Caco-2 (cell line): ENCODE measurements at regions of chr1 and their contacts with region 1.

Region 1: DNA sequence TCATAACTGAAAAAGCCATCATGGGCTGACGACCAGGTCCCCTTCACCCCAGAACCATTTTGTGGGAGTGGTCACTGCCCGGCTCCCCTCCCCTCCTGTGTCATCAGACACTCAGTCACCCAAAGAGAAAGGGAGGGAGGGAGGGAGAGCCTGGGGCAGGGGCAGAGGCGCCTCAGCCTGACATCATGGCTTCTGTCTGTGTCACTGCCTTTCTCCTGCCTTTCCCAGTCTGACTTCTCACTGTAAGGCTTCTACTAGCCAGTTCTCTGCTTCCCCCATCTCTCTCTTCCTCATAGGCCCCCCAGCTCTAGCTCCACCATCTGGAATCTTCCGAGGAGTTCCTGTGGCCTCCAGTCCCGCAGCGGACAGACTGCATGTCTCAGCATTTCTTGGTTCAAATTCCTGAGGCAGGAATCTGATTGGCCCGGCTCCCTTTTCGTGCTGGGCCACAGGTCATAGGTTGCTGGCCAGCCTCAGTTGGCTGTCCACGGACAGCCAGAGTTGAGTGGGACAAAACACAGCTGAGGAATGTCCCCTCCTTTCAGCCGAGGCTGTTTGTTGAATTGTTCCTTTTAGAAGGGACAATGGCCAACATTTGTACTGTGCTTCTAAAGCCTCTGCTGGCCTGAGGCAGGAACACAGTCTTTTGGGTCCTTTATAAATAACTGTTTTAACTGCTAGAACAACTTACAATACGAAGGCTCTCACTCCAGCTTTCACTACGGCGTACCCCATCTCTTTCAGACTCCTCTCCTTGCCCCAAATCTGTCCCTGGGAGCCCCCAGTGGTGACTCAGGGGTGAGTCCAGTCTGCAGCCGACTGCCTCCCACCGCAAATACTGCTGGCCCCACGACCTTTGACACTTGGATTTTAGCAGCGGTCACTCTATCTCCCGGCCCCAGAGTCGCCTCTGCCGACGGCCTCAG is 18.7 kb upstream of the KANK4 start:
- DNase-seq: no peak
- H3K4me3 ChIP-seq: no peak overlapping the region
- H3K4me3 Mint-ChIP-seq: peak overlapping the region; percentile 40
- H3K27ac Mint-ChIP-seq: peak overlapping the region; percentile 82
- H3K4me1 ChIP-seq: peaks cover 13% of the 10 kb centered on the region
- H3K4me1 Mint-ChIP-seq: peaks cover 11% of the 10 kb centered on the region
- H3K27me3 ChIP-seq: no peaks in the 10 kb centered on the region
- H3K27me3 Mint-ChIP-seq: no peaks in the 10 kb centered on the region
- CTCF ChIP-seq: peak in 1 of 2 experiments; percentile 12

Region 2: DNA sequence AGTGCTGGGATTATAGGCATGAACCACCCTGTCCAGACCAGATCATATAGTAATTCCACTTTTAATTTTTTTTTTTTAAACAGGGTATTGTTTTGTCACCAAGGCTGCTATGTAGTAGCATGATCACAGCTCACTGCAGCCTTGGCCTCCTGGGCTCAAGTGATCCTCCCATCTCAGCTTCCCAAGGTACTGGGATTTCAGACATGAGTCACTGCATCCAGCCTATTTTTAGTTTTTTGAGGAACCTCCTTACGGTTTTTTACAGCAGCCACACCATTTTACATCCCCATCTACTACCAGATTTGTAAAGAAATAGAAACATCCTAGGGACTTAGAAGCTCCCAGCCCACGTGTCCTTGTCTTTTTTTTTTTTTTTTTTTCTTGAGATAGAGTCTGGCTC is 119.4 kb before region 1 on chr1:
- CTCF ChIA-PET with region 1: no interaction called
- POLR2A ChIA-PET with region 1: no interaction called
- intact Hi-C with region 1: no loop called
- DNase-seq: no peak
- H3K4me3 ChIP-seq: no peak overlapping the region
- H3K4me3 Mint-ChIP-seq: no peak overlapping the region
- H3K27ac Mint-ChIP-seq: no peak overlapping the region
- H3K4me1 ChIP-seq: no peaks in the 10 kb centered on the region
- H3K4me1 Mint-ChIP-seq: no peaks in the 10 kb centered on the region
- H3K27me3 ChIP-seq: no peaks in the 10 kb centered on the region
- H3K27me3 Mint-ChIP-seq: no peaks in the 10 kb centered on the region
- CTCF ChIP-seq: no peak

Region 3: GRCh38 chr1:62230709-62231108 is 107.3 kb before region 1 on chr1:
- CTCF ChIA-PET with region 1: no interaction called
- POLR2A ChIA-PET with region 1: interaction called, 10 read pairs
- intact Hi-C with region 1: no loop called
- DNase-seq: peak; percentile 48 to 74
- H3K4me3 ChIP-seq: no peak overlapping the region
- H3K4me3 Mint-ChIP-seq: no peak overlapping the region
- H3K27ac Mint-ChIP-seq: peak overlapping the region; percentile 73
- H3K4me1 ChIP-seq: peaks cover 33% of the 10 kb centered on the region
- H3K4me1 Mint-ChIP-seq: peaks cover 38% of the 10 kb centered on the region
- H3K27me3 ChIP-seq: no peaks in the 10 kb centered on the region
- H3K27me3 Mint-ChIP-seq: no peaks in the 10 kb centered on the region
- CTCF ChIP-seq: no peak